PC-3 (cell line): ENCODE measurements at regions of chr17 and their contacts with region 1.

Region 1: DNA sequence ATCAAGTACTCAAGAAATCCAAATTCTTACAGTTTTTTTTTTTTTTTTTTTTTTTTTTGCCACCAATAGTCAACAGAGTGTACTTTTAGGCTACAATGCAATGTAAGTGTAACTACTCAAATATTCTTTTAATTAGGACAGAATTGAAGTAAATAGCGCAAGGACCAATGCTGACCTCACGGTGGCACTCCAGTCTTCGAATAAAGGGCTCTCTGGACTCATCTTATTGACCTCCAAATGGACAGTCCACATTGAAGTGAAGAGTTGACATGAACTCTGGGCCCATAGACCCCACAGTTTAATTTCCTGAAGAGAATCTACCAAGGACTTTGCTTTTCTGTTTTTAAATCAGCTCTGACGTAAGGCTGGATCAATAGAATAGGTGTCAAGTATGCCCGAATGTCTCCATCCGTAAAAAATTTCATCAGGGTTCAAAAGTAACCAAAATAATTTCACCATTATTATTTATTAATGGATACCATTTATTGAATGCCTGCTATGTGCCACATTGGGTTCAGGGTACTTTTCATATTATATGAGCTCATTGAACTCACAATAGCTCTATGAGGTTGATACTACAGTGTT is 7.3 kb upstream of the DDX52 start:
- DNase-seq: peak; percentile 46
- ATAC-seq: no peak
- H3K4me3 ChIP-seq: no peak overlapping the region
- H3K27ac ChIP-seq: no peak overlapping the region
- H3K4me1 ChIP-seq: peaks cover 12% of the 10 kb centered on the region
- H3K27me3 ChIP-seq: no peaks in the 10 kb centered on the region
- CTCF ChIP-seq: peak; percentile 62

Region 2: DNA sequence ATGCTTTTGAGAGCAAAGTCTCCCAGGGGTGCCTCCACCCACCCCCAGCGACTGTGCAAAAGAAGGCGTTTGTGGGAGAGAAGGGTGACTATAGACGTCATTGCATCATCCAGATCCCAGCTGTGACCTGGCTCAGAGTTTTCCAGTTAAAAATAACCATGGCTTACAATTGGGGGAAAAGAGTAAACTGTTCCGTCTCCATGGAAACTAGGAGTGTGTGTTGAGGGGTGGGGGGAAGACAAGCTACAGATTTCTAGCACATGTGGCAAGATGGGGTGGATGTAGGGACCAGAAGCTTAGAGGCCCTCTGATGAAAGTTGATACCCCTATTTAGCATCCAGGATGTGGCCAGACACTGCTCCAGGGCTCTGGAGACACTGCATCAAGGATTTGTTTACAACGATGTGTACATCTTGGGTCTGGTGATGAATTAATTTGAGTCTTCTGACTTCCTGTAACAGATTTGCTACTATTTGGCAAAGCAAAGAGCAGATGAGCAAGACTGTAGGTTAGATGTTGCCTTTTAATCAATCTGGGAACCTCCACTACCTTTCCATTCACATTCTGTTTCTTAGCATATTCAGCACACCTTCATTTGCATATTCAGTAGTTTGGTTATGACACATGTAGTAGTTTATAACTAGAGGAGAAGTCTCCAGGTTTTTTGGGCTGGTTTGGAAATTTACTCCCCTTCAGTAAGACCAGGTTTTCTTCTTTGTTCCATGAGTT is 167.0 kb before region 1 on chr17:
- CTCF ChIA-PET with region 1: no interaction called
- POLR2A ChIA-PET with region 1: no interaction called
- intact Hi-C with region 1: no loop called
- DNase-seq: no peak
- ATAC-seq: no peak
- H3K4me3 ChIP-seq: no peak overlapping the region
- H3K27ac ChIP-seq: no peak overlapping the region
- H3K4me1 ChIP-seq: peaks cover 18% of the 10 kb centered on the region
- H3K27me3 ChIP-seq: no peaks in the 10 kb centered on the region
- CTCF ChIP-seq: no peak

Region 3: GRCh38 chr17:37671824-37672547 is 21.5 kb after region 1 on chr17:
- CTCF ChIA-PET with region 1: interaction called, 10 read pairs
- POLR2A ChIA-PET with region 1: no interaction called
- intact Hi-C with region 1: no loop called
- DNase-seq: peak; percentile 85
- ATAC-seq: peak; percentile 93
- H3K4me3 ChIP-seq: no peak overlapping the region
- H3K27ac ChIP-seq: peak overlapping the region; percentile 61
- H3K4me1 ChIP-seq: peaks cover 18% of the 10 kb centered on the region
- H3K27me3 ChIP-seq: no peaks in the 10 kb centered on the region
- CTCF ChIP-seq: no peak

Region 4: GRCh38 chr17:37816950-37817349 is 166.4 kb after region 1 on chr17:
- CTCF ChIA-PET with region 1: no interaction called
- POLR2A ChIA-PET with region 1: no interaction called
- intact Hi-C with region 1: loop called (anchors 2 kb)
- DNase-seq: no peak
- ATAC-seq: peak; percentile 52
- H3K4me3 ChIP-seq: no peak overlapping the region
- H3K27ac ChIP-seq: no peak overlapping the region
- H3K4me1 ChIP-seq: peaks cover 11% of the 10 kb centered on the region; the same call in 1 of the 2 replicates
- H3K27me3 ChIP-seq: no peaks in the 10 kb centered on the region
- CTCF ChIP-seq: no peak